Posterior vena cava (tissue), 2 donors: ENCODE measurements at regions of chr10 and their contacts with region 1.

Region 1: GRCh38 chr10:67666416-67667034 is 29.5 kb downstream of the CTNNA3 start:
- DNase-seq: no peak

Region 2: DNA sequence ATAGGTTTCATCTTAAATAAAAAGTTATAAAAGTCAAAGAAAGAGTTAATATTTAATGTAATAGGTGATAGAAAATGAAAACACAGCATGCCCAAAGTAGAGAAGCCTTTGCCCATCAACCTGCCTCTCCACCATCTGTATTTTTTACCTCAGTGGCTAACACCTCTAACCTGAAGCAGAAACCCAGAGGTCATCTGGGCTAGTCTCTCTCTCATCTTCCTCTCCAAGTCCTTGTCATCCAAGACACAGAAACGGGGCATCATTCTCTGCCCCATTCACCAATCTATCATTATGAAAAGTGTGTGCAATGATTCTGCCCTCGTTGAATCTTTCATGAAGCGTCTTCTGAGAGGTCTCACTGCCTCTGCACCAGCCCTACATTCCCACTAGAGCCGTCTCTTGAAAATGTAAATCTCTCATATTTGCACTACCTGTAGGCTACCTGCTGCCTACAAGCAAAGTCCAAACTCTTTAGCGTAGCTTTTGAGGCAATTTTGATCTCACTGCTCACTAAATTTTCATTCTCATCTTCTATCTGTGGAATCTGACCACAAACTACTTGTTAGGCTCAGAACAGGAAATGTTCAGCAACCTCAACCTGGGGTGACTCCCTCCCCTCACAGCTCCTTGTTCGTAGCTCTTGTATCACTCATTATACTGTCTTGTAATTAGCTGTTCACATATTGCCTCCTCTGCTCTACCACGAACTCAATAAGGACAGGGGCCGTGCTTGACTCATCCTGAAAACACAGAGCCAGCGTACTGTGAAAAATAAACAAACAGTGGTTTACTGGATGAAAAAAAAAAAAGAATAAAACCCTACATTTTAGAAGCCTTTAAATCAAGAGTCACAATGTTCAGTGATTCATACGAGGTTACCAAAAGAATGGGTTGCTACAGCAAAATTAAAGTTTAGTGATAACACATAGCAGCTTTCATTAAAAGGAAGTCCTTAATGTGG is 53.7 kb before region 1 on chr10:
- intact Hi-C with region 1: no loop called
- DNase-seq: no peak

Region 3: GRCh38 chr10:67735430-67735829 is 68.9 kb after region 1 on chr10:
- intact Hi-C with region 1: no loop called
- DNase-seq: no peak

Region 4: GRCh38 chr10:67779465-67780203 is 113.1 kb after region 1 on chr10:
- intact Hi-C with region 1: loop called (anchors 5 to 10 kb)
- DNase-seq: no peak